Activated naive CD4-positive, alpha-beta T cell treated with anti-CD3 and anti-CD28 coated beads for 36 hours (primary cell): ENCODE measurements at regions of chr16 and their contacts with region 1.

Region 1: DNA sequence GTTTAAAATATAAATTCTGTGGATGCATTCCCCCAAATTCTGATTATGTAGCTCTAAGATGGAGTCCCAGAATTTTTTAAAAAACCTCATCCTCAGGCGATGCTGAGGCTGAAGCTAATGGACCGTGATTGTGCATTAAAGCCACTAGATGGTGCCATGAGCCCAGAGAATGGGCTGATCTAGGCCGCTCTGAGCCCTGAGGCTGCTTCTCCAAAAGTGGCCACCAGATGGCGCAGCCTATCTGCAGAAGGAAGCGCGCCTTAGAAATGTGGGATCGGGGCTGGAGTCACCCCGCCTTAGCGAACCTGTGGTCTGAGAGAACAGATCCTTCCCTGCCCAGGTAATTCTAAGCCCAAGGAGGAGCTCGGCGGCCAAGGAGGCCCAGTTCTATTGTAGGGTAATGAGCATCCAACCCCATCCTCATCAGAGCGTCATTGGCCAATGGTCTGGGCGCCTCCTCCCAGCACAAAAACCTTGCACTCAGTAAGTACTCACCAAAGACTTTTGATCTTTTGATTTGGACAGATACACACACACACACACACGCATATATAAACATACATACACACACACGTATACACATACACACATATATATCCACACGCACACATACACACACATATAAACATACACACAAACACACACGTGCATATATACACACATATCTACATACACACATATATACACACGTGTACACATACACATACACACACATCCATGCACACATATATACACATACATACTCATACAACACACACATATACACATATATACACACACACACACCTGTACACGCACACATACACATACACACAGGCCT is 13.7 kb upstream of the MMP2 start:
- DNase-seq: peak; percentile 89
- H3K4me3 Mint-ChIP-seq: no peak overlapping the region
- H3K27ac Mint-ChIP-seq: no peak overlapping the region
- H3K4me1 Mint-ChIP-seq: no peaks in the 10 kb centered on the region
- H3K27me3 Mint-ChIP-seq: peaks cover 3% of the 10 kb centered on the region

Region 2: DNA sequence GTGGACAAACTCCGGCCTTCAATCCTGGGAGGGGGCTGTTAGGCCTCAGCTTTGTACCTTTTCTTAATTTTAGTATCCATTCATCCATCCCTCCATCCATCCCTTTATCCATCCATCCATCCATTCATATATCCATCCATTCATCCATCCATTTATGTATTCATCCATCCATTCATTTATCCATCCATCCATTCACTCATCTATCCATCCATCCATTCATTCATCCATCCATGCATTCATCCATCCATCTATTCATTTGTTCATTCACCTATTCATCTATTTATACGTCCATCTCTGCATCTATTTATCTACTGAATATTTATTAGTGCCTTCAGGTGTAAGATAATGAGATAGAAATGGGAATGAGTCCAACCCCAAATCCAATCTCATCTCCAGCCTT is 12.3 kb before region 1 on chr16:
- CTCF ChIA-PET with region 1: interaction called, 19 read pairs
- intact Hi-C with region 1: no loop called
- DNase-seq: no peak
- H3K4me3 Mint-ChIP-seq: no peak overlapping the region
- H3K27ac Mint-ChIP-seq: no peak overlapping the region
- H3K4me1 Mint-ChIP-seq: no peaks in the 10 kb centered on the region
- H3K27me3 Mint-ChIP-seq: no peaks in the 10 kb centered on the region

Region 3: GRCh38 chr16:55515111-55515510 is 49.8 kb after region 1 on chr16:
- CTCF ChIA-PET with region 1: interaction called, 10 read pairs
- intact Hi-C with region 1: no loop called
- DNase-seq: no peak
- H3K4me3 Mint-ChIP-seq: no peak overlapping the region
- H3K27ac Mint-ChIP-seq: no peak overlapping the region
- H3K4me1 Mint-ChIP-seq: no peaks in the 10 kb centered on the region
- H3K27me3 Mint-ChIP-seq: peaks cover 21% of the 10 kb centered on the region

Region 4: DNA sequence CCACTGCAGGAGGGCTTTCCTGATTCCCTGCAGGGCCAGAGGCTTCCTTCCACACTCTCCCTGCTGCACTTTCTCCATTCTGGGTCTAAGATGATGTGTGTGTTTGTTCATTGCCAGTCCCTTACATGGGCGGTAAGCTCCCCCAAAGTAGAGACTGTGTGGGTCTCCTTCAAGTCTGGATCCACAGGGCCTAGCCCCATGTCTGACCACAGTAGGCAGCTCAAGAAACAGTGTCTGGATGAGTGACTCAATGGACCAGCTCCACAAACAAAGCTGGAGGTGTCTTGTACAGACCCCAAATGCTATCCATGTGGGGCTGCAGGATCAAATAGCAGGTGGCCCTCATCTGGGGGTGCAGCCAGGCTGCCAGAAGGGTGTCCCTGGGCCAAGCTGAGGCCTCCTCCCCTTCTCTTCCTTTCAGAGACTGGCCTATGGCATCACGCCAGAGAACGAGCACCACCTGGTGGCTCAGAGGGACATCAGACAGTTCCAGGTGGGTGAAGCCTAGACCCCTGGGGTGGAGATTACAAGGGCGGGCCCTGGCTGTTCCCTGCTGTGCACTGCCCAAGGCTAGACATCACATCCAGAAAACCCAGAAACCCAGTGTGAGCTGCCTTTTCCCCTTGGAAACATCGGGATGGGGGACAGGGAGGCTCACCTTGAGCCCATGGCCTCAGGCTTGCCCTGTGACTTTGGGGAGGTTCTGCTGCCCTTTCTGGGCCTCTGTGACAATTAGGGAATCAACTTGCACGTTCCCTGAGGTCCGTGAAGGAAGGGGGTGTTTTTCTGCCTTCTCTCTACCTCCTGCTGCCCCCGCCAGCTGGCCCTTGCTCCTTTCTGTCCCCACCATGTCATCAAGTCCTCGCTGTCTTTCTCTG is 236.4 kb after region 1 on chr16:
- CTCF ChIA-PET with region 1: interaction called, 140 read pairs
- intact Hi-C with region 1: loop called (anchors 1 kb)
- DNase-seq: peak; percentile 58
- H3K4me3 Mint-ChIP-seq: no peak overlapping the region
- H3K27ac Mint-ChIP-seq: no peak overlapping the region
- H3K4me1 Mint-ChIP-seq: no peaks in the 10 kb centered on the region
- H3K27me3 Mint-ChIP-seq: peaks cover 2% of the 10 kb centered on the region

Region 5: DNA sequence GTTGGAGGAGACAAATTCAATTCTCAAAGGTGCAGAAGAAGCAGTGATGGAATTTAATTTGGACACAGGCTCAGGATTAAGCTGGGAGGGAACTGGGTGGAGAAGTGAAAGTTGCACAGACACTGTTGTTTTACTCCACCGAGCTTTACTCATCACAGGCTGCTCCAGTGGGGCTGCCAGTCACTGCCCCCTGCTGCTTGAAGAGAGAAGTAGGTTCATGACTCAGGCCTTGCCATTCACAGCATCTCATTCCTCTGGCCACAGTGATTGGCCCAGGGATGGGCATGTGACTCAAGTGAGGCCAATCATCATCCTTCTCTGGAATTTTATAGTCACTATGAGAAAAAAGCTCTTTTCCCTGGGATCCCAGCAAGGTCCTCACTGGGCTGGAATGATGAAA is 737.8 kb after region 1 on chr16:
- CTCF ChIA-PET with region 1: interaction called, 3 read pairs
- intact Hi-C with region 1: loop called (anchors 1 kb)
- DNase-seq: peak; percentile 75
- H3K4me3 Mint-ChIP-seq: no peak overlapping the region
- H3K27ac Mint-ChIP-seq: no peak overlapping the region
- H3K4me1 Mint-ChIP-seq: peaks cover 21% of the 10 kb centered on the region
- H3K27me3 Mint-ChIP-seq: peaks cover 5% of the 10 kb centered on the region